GM13977 (cell line): ENCODE measurements at regions of chr17 and their contacts with region 1.

Region 1: DNA sequence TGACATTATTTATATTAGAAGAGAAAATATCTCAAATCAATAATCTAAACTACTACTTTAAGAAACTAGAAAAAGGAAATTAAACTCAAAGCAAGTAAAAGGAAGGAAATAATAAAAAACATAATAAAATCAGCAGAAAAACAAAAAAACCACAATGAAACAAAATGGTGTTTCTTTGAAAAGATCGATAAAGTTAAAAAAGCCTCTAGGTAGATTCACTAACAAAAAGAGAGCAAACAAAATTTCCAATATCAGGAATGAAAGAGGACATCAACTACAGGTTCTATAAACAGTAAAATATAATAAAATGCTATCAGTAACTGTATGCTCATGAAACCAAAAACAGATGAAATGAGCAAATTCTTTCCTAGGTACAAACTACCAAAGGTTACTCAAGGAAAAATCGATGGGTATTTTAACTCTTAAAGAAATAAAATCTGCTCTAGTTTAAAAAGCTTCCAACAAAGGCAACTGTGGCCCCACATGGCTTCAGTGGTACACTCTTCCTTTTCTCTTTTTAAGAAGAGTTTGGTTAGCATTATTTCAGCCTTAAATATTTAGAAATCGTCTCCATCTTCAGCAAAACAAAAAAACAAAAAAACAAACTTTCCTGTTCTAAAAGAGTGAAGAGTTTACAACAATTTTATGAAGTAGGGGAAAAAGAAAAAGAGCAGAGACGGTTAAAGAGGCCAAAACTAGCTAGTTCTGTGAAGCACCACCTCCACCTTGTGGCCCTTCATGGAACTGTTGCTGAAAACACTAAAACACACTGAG is 102.2 kb downstream of the TRIM37 start:
- DNase-seq: peak; percentile 48
- CTCF ChIP-seq: peak; percentile 90

Region 2: GRCh38 chr17:58520843-58521430 is 483.6 kb before region 1 on chr17:
- in situ Hi-C with region 1: loop called (anchors 10 kb)
- DNase-seq: no peak
- CTCF ChIP-seq: peak; percentile 18

Region 3: DNA sequence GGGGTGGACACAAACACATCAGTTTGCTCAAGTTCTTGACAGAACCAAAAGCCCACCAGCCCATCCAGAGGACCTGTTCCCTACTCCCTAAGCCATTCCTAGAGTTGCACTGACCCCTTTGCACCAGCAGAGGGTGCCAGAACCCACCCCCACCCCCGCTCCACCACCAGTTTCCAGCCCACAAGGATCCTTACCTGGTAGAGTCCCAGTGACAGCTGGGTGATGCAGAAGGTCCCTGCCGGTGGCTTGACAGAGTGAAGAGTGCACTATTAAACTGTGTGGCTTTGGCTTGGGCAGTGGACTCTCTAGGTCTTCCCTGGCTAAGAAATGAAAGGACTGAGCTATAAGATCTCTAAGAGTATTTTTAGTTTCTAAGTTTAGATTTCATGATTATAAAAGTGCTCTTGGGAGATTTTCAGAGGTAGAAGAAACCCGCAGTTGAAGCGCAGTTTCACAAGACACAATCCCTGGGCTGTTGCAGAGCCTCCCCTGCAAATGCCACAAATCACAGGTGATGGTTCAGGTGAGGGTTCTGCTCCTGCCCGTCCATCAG is 416.7 kb before region 1 on chr17:
- in situ Hi-C with region 1: loop called (anchors 25 kb)
- DNase-seq: peak; percentile 66
- CTCF ChIP-seq: peak; percentile 92

Region 4: GRCh38 chr17:58710936-58711775 is 293.4 kb before region 1 on chr17:
- in situ Hi-C with region 1: loop called (anchors 5 kb)
- DNase-seq: peak; percentile 28
- CTCF ChIP-seq: peak; percentile 62